PC-3 (cell line): ENCODE measurements at regions of chr1 and their contacts with region 1.

Region 1: GRCh38 chr1:41152622-41153044 is 89.5 kb downstream of the SCMH1 start:
- DNase-seq: peak; percentile 96
- ATAC-seq: peak; percentile 85
- H3K4me3 ChIP-seq: no peak overlapping the region
- H3K27ac ChIP-seq: peak overlapping the region; percentile 80
- H3K4me1 ChIP-seq: peaks cover 56% of the 10 kb centered on the region
- H3K27me3 ChIP-seq: no peaks in the 10 kb centered on the region
- CTCF ChIP-seq: no peak

Region 2: DNA sequence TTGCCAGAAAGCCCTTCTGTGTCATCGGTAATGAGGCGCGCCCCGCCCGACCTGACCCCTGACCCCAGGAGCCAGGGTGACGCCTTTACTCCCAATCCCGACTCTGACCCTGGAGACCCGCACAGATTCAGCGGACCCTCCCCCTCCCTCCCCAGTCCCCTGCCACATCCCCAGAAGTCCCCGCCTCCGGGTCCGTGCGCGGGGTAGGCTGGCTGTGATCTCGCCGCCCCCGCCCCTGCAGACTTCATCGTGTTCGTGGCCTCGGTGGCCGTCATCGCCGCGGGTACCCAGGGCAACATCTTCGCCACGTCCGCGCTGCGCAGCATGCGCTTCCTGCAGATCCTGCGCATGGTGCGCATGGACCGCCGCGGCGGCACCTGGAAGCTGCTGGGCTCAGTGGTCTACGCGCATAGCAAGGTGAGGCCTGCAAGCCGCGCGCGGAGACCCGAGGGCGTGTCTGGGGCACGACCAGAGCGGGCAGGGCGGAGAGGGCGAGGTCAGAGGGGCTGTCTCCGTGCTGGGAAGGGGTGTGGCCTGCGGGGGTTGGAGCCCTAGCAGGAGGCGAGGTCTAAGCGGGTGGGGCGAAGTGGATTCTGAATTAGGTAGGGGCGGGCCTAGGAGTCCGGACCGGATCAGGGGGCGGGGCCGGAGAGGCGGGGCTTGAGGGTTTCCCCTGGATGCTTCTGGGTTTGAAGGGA is 334.2 kb before region 1 on chr1:
- CTCF ChIA-PET with region 1: no interaction called
- POLR2A ChIA-PET with region 1: no interaction called
- intact Hi-C with region 1: no loop called
- DNase-seq: no peak
- ATAC-seq: no peak
- H3K4me3 ChIP-seq: no peak overlapping the region
- H3K27ac ChIP-seq: no peak overlapping the region
- H3K4me1 ChIP-seq: no peaks in the 10 kb centered on the region
- H3K27me3 ChIP-seq: no peaks in the 10 kb centered on the region
- CTCF ChIP-seq: no peak

Region 3: GRCh38 chr1:41484372-41485241 is 332.0 kb after region 1 on chr1 and contains the start of gene EDN2:
- CTCF ChIA-PET with region 1: interaction called, 15 read pairs
- POLR2A ChIA-PET with region 1: no interaction called
- intact Hi-C with region 1: no loop called
- DNase-seq: peak; percentile 63
- ATAC-seq: peak; percentile 76
- H3K4me3 ChIP-seq: peak within 1 kb of the TSS; percentile 29; the same call in 1 of the 2 replicates
- H3K27ac ChIP-seq: no peak within 1 kb of the TSS
- H3K4me1 ChIP-seq: peaks cover 37% of the 10 kb centered on the region
- H3K27me3 ChIP-seq: no peaks in the 10 kb centered on the region
- CTCF ChIP-seq: peak; percentile 52
- total RNA-seq, gene EDN2: 0.36 TPM in 1 of 2 replicates, not detected in the other